ENCODE measurements at regions of chr11 and their contacts with region 1.

Region 1: DNA sequence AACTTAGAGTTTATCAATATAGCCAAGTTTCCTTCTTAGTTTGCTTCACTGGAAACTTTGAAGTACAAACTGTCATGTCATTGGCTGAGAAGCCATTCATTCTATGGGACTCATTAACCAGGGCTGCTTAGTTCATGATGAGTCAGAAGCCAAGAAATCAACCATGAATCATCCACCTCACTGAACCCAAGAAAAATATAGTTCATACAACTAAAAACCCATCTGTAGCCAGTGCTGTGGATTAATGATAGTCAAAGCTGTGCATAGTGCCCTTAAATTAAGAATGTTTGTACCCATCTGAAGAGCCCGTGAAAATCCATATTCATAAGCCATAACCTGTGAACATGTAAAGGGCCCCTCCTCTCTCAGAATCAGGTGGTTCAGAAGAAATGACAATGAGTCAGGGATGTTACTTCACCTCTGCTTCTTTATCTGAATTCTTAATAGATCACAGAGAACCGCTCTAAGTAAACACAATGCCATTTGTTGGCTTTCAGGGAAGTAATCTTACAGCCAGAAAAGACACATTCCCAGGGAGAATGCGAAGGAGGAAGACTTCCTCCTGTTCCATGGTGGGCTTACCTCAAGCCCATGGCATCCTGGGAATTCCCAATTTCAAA is 25.4 kb downstream of the MMP20 start:
- DNase-seq: no peak
- ATAC-seq: peak; percentile 96
- H3K4me3 Mint-ChIP-seq: no peak overlapping the region
- H3K27ac Mint-ChIP-seq: peak overlapping the region; percentile 75
- H3K4me1 Mint-ChIP-seq: peaks cover 28% of the 10 kb centered on the region
- H3K27me3 Mint-ChIP-seq: no peaks in the 10 kb centered on the region

Region 2: DNA sequence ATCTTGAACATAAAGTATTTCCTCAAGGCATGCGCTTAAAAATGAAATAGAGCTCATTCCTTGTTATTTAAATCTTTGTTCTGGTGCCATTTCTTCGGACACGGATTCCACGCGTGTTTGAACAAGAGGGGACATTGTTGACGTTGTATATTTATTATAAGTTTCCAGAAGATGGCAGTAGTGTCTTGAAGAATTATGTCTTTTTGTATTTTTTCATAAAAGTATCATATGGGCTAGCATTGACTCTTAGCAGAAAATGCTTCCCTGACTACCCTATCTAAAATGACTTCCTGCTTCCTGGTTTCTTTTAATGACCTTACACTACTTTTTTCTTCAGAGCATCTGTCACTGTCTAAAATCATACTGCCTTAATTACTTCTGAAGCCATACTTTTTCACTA is 232.4 kb before region 1 on chr11:
- CTCF ChIA-PET with region 1: no interaction called
- POLR2A ChIA-PET with region 1: no interaction called
- intact Hi-C with region 1: no loop called
- DNase-seq: no peak
- ATAC-seq: peak; percentile 50
- H3K4me3 Mint-ChIP-seq: no peak overlapping the region
- H3K27ac Mint-ChIP-seq: no peak overlapping the region
- H3K4me1 Mint-ChIP-seq: peaks cover 27% of the 10 kb centered on the region
- H3K27me3 Mint-ChIP-seq: no peaks in the 10 kb centered on the region

Region 3: DNA sequence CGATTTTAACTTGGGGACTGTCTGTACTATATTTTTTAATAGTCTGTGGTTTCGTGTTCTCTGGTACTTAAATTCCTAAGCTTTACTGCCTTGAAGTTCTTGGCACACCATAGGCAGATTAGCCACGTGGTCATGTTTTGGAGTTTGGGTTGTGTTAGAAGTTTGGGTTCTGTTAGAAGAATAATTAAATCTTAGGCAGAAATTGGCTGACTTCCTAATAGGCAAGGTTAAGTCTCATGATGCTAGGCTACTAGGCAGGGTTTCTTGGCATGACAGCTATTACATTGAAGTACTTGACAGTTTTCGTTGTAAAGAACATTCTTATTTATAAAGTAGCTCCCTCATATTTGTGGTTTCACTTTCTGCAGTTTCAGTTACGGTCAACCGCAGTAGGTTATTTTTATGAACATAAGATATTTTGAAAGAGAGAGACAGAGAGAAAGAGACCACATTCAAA is 39.2 kb before region 1 on chr11:
- CTCF ChIA-PET with region 1: interaction called, 7 read pairs
- POLR2A ChIA-PET with region 1: no interaction called
- intact Hi-C with region 1: loop called (anchors 1 kb)
- DNase-seq: no peak
- ATAC-seq: peak; percentile 55
- H3K4me3 Mint-ChIP-seq: peak overlapping the region; percentile 38
- H3K27ac Mint-ChIP-seq: peak overlapping the region; percentile 24
- H3K4me1 Mint-ChIP-seq: peaks cover 40% of the 10 kb centered on the region
- H3K27me3 Mint-ChIP-seq: peaks cover 2% of the 10 kb centered on the region

Region 4: GRCh38 chr11:102589047-102589459 is 10.7 kb before region 1 on chr11:
- CTCF ChIA-PET with region 1: interaction called, 4 read pairs
- POLR2A ChIA-PET with region 1: no interaction called
- intact Hi-C with region 1: loop called in 1 of 2 experiments (anchors 1 kb)
- DNase-seq: peak; percentile 74
- ATAC-seq: peak; percentile 81
- H3K4me3 Mint-ChIP-seq: no peak overlapping the region
- H3K27ac Mint-ChIP-seq: no peak overlapping the region
- H3K4me1 Mint-ChIP-seq: peaks cover 20% of the 10 kb centered on the region
- H3K27me3 Mint-ChIP-seq: no peaks in the 10 kb centered on the region

Region 5: GRCh38 chr11:102623998-102624397 is 24.2 kb after region 1 on chr11:
- CTCF ChIA-PET with region 1: no interaction called
- POLR2A ChIA-PET with region 1: no interaction called
- intact Hi-C with region 1: no loop called
- DNase-seq: no peak
- ATAC-seq: no peak
- H3K4me3 Mint-ChIP-seq: no peak overlapping the region
- H3K27ac Mint-ChIP-seq: no peak overlapping the region
- H3K4me1 Mint-ChIP-seq: no peaks in the 10 kb centered on the region
- H3K27me3 Mint-ChIP-seq: peaks cover 6% of the 10 kb centered on the region

Region 6: DNA sequence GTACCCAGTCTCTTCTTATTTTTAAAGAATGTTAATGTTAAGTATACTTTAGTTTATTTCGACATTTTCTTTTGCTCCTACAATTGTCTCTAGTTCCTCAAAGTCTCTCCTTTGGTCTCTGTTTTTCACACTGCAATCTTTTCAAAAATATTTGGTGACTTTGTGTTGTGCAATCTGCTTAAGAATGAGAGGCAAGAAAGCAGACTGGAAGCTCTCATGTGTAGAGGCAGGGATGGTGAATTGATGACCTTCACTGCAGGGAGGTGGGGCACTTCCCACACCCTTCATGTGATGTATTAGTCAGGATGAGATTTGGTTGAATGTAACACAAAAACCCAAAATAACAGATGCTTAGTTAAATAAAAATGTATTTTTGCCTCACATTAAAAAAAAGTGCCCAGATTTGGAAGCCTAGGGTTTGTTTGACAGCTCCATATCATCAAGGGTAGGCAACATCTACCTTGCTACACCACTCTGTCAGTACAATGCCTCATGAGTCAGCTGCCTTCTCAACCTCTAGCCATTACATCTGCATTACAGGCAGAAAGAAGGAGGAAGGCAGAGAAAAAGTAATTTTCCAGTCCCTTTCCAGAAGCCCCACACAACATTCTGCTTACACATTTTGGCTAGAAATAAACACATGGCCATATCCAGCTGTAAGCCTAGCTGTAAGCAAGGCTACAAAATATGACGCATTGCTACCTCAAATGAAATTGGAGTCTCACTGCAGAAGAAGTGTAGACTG is 109.6 kb after region 1 on chr11:
- CTCF ChIA-PET with region 1: no interaction called
- POLR2A ChIA-PET with region 1: no interaction called
- intact Hi-C with region 1: no loop called
- DNase-seq: no peak
- ATAC-seq: no peak
- H3K4me3 Mint-ChIP-seq: no peak overlapping the region
- H3K27ac Mint-ChIP-seq: no peak overlapping the region
- H3K4me1 Mint-ChIP-seq: no peaks in the 10 kb centered on the region
- H3K27me3 Mint-ChIP-seq: peaks cover 8% of the 10 kb centered on the region

Measured in activated CD4-positive, alpha-beta T cell treated with anti-CD3 and anti-CD28 coated beads for 36 hours (primary cell).